T-cell (primary cell): ENCODE measurements at regions of chr12 and their contacts with region 1.

Region 1: GRCh38 chr12:54993161-54993835 is 8.7 kb upstream of the TESPA1 start:
- DNase-seq: peak in 31 of 35 experiments; percentile 30 to 91 (median 46)
- ATAC-seq: peak; percentile 66 to 81 (median 74)
- H3K4me3 ChIP-seq: no peak overlapping the region
- H3K4me3 Mint-ChIP-seq: no peak overlapping the region
- H3K27ac ChIP-seq: no peak overlapping the region
- H3K27ac Mint-ChIP-seq: peak overlapping the region in 1 of 2 donors; percentile 25
- H3K4me1 ChIP-seq: peaks cover 31 to 34% of the 10 kb centered on the region in 2 experiments
- H3K4me1 Mint-ChIP-seq: peaks cover 44 to 47% (median 46%) of the 10 kb centered on the region in 3 donors
- H3K27me3 ChIP-seq: no peaks in the 10 kb centered on the region
- H3K27me3 Mint-ChIP-seq: no peaks in the 10 kb centered on the region

Region 2: DNA sequence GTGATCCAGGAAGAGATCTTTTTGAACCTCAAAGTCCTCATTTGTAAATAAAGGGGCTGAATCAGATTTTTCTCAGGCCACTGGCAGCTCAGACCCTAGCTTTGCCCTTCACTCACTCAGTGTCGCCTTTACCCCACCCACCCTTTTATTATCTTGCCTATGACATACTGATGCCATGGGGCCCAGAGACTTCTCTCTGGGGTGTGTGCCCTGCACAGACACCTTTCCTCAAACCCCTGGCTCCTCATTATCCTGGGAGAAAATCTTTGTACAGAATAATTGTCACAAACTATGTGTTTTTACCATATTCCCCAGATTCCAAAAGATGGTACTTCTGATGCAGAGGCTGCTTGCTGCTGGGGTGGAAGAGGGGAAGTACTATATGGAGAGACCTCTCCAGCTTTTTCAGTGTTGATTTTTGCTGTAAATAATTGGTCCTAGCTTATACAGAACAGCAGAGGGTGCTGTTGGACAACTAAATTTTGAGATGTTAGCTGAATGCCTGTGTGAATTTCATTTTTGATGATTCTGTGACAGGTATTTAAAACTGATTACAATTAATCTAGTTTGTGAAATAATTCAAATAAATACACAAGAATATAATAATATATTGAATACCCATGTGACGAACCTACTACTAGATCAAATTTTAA is 291.2 kb before region 1 on chr12:
- CTCF ChIA-PET with region 1: interaction called, 7 to 14 read pairs
- POLR2A ChIA-PET with region 1: no interaction called
- DNase-seq: peak in 11 of 35 experiments; percentile 4 to 81 (median 11)
- ATAC-seq: peak; percentile 48 to 55 (median 51)
- H3K4me3 ChIP-seq: no peak overlapping the region
- H3K4me3 Mint-ChIP-seq: no peak overlapping the region
- H3K27ac ChIP-seq: no peak overlapping the region
- H3K27ac Mint-ChIP-seq: no peak overlapping the region
- H3K4me1 ChIP-seq: no peaks in the 10 kb centered on the region
- H3K4me1 Mint-ChIP-seq: no peaks in the 10 kb centered on the region
- H3K27me3 ChIP-seq: peaks cover 0 to 3% of the 10 kb centered on the region in 2 experiments
- H3K27me3 Mint-ChIP-seq: peaks cover 8 to 12% of the 10 kb centered on the region in 2 donors

Region 3: GRCh38 chr12:54968181-54968730 is 25.0 kb before region 1 on chr12:
- CTCF ChIA-PET with region 1: interaction called, 6 to 14 read pairs
- POLR2A ChIA-PET with region 1: interaction called in 1 of 2 experiments, 3 read pairs
- DNase-seq: peak in 9 of 35 experiments; percentile 2 to 57 (median 25)
- ATAC-seq: peak; percentile 56 to 79 (median 59)
- H3K4me3 ChIP-seq: no peak overlapping the region
- H3K4me3 Mint-ChIP-seq: peak overlapping the region; percentile 53 to 70 (median 69)
- H3K27ac ChIP-seq: peak overlapping the region; percentile 65
- H3K27ac Mint-ChIP-seq: peak overlapping the region; percentile 86 to 94
- H3K4me1 ChIP-seq: peaks cover 9 to 60% of the 10 kb centered on the region in 2 experiments
- H3K4me1 Mint-ChIP-seq: peaks cover 78 to 85% (median 84%) of the 10 kb centered on the region in 3 donors
- H3K27me3 ChIP-seq: no peaks in the 10 kb centered on the region
- H3K27me3 Mint-ChIP-seq: no peaks in the 10 kb centered on the region

Region 4: GRCh38 chr12:54977155-54977554 is 16.1 kb before region 1 on chr12:
- CTCF ChIA-PET with region 1: interaction called, 5 to 35 read pairs
- POLR2A ChIA-PET with region 1: interaction called in 1 of 2 experiments, 3 read pairs
- DNase-seq: no peak
- ATAC-seq: no peak
- H3K4me3 ChIP-seq: peak overlapping the region in 1 of 2 donors; percentile 27
- H3K4me3 Mint-ChIP-seq: peak overlapping the region; percentile 90 to 92 (median 91)
- H3K27ac ChIP-seq: peak overlapping the region; percentile 13
- H3K27ac Mint-ChIP-seq: peak overlapping the region; percentile 92 to 98
- H3K4me1 ChIP-seq: peaks cover 53 to 75% of the 10 kb centered on the region in 2 experiments
- H3K4me1 Mint-ChIP-seq: peaks cover 96 to 99% (median 98%) of the 10 kb centered on the region in 3 donors
- H3K27me3 ChIP-seq: no peaks in the 10 kb centered on the region
- H3K27me3 Mint-ChIP-seq: no peaks in the 10 kb centered on the region